ENCODE measurements at regions of chr1 and their contacts with region 1.

Region 1: DNA sequence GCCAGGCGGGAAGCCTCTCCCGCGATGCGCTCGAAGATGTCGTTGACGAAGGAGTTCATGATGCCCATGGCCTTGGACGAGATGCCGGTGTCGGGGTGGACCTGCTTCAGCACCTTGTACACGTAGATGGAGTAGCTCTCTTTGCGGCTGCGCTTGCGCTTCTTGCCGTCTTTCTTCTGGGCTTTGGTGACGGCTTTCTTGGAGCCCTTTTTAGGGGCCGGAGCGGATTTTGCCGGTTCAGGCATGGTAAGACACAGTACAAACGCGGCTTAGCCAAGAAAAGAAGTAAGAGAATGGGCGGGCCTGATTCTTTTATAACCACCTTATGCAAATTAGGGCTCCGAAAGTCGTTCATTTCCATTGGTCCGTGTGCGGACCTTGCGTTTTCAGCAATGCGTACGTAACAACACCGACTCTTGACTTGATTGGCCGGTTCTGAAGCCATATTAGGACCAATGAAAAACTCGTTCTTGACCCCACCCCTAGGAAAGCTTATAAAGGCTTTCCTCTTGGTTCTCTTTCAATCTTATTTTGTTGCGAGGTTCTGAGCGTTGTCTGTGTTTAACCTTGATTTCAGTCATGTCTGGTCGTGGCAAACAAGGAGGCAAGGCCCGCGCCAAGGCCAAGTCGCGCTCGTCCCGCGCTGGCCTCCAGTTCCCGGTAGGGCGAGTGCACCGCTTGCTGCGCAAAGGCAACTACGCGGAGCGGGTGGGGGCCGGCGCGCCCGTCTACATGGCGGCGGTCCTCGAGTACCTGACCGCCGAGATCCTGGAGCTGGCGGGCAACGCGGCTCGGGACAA is 12.8 kb upstream of the BOLA1 start:
- DNase-seq: peak; percentile 71
- ATAC-seq: peak; percentile 65
- H3K4me3 Mint-ChIP-seq: no peak overlapping the region
- H3K27ac Mint-ChIP-seq: no peak overlapping the region
- H3K4me1 Mint-ChIP-seq: peaks cover 4% of the 10 kb centered on the region
- H3K27me3 Mint-ChIP-seq: no peaks in the 10 kb centered on the region
- CTCF ChIP-seq: no peak

Region 2: GRCh38 chr1:149844101-149844500 is 42.5 kb before region 1 on chr1:
- CTCF ChIA-PET with region 1: no interaction called
- POLR2A ChIA-PET with region 1: interaction called, 51 read pairs
- DNase-seq: no peak
- ATAC-seq: no peak
- H3K4me3 Mint-ChIP-seq: peak overlapping the region; percentile 91
- H3K27ac Mint-ChIP-seq: peak overlapping the region; percentile 93
- H3K4me1 Mint-ChIP-seq: peaks cover 44% of the 10 kb centered on the region
- H3K27me3 Mint-ChIP-seq: no peaks in the 10 kb centered on the region
- CTCF ChIP-seq: no peak

Region 3: DNA sequence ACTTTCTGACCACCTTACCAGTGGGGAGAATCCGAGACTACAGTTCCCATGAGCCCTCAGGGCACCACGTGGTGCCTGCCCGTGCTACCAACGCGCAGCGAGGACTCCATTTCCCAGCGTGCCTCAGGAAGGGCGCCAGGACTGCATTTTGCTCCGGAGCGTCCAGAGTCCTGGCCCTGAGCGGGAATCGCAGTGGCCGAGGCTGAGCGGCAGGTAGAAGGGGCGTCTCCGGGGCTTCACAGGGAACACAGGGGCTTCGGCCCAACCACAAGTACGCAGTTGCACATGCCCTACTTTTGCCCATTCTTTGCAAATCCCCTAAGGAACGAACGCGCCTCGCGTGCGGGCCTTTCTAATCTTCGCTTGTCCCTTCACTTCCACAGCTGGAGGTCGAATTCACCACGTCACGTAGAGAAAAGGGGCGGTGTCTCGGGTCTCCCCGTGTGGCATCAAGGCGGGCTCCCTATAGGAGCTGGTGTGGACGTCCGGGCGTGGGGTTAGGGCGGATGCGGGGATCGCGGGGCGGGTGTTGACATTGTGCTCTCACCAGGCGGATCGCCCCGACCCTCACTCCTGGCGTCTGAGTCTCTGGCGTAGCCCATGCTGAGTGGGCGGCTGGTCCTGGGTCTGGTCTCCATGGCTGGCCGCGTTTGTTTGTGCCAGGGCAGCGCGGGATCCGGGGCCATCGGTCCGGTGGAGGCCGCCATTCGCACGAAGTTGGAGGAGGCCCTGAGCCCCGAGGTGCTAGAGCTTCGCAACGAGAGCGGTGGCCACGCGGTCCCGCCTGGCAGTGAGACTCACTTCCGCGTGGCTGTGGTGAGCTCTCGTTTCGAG is 13.1 kb after region 1 on chr1 and contains the start of gene BOLA1:
- CTCF ChIA-PET with region 1: interaction called, 3 read pairs
- POLR2A ChIA-PET with region 1: interaction called, 18 read pairs
- DNase-seq: peak; percentile 94
- ATAC-seq: peak; percentile 97
- H3K4me3 Mint-ChIP-seq: peak within 1 kb of the TSS; percentile 78
- H3K27ac Mint-ChIP-seq: peak within 1 kb of the TSS; percentile 55
- H3K4me1 Mint-ChIP-seq: peaks cover 25% of the 10 kb centered on the region
- H3K27me3 Mint-ChIP-seq: no peaks in the 10 kb centered on the region; the same call in 1 of the 2 replicates
- CTCF ChIP-seq: no peak
- total RNA-seq, gene BOLA1: 15.3 to 19.5 TPM (median 15.4 TPM) in 3 replicates

Region 4: DNA sequence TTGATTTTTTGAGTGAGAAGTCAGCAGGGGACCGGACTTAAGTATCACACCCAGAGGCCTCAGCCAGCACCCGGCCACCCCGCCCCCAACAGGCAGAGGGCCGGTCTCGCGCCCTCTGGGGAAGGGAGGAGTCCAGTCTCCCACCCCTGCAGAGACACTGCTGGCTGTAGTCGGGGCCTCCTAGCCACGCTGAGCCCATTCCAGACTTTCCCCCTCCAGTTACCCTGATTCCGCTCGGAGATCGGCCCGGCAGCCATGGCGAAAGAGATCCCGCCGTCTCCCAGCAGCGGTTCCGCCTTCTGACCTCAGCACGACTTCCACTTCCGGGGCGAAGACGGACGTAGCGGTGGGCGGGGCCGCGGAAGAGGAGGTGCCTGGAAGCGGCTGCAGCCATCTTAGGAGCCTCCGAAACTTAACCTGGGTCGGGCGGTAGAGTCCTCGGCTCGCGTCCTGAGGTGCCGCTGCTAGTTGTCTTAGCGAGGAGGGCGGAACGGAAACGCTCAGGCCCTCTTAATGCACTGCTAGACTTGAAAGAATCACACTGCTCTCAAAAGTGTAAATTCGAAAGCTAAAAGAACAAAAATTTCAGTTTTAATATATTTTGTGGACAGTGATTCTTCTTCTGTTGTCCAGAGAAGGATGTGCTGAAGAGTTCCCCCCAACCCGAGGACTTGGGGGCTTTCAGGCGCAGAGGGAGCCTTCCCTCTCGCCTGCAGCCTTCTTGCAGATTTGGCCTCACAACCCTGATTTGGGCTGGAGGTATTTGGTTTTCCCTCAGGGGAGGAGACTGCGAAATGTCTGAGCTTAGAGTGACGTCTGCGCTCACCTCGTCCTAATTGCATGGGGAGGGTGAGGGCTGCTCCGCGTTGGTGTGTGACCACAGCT is 41.1 kb after region 1 on chr1 and contains the start of gene SF3B4:
- CTCF ChIA-PET with region 1: interaction called, 5 read pairs
- POLR2A ChIA-PET with region 1: interaction called, 28 read pairs
- DNase-seq: peak; percentile 95
- ATAC-seq: peak; percentile 94
- H3K4me3 Mint-ChIP-seq: peak within 1 kb of the TSS; percentile 100
- H3K27ac Mint-ChIP-seq: peak within 1 kb of the TSS; percentile 99
- H3K4me1 Mint-ChIP-seq: peaks cover 24% of the 10 kb centered on the region
- H3K27me3 Mint-ChIP-seq: no peaks in the 10 kb centered on the region
- CTCF ChIP-seq: no peak
- total RNA-seq, gene SF3B4: 83.0 to 90.1 TPM (median 84.7 TPM) in 3 replicates

Region 5: GRCh38 chr1:149942207-149942606 is 55.6 kb after region 1 on chr1:
- CTCF ChIA-PET with region 1: interaction called, 3 read pairs
- POLR2A ChIA-PET with region 1: interaction called, 16 read pairs
- DNase-seq: peak; percentile 53
- ATAC-seq: peak; percentile 77
- H3K4me3 Mint-ChIP-seq: no peak overlapping the region
- H3K27ac Mint-ChIP-seq: peak overlapping the region; percentile 49
- H3K4me1 Mint-ChIP-seq: peaks cover 48% of the 10 kb centered on the region
- H3K27me3 Mint-ChIP-seq: no peaks in the 10 kb centered on the region; the same call in 1 of the 2 replicates
- CTCF ChIP-seq: no peak

Region 6: GRCh38 chr1:149963358-149963757 is 76.8 kb after region 1 on chr1:
- CTCF ChIA-PET with region 1: no interaction called
- POLR2A ChIA-PET with region 1: no interaction called
- DNase-seq: no peak
- ATAC-seq: no peak
- H3K4me3 Mint-ChIP-seq: no peak overlapping the region
- H3K27ac Mint-ChIP-seq: no peak overlapping the region; the same call in 1 of the 2 replicates
- H3K4me1 Mint-ChIP-seq: no peaks in the 10 kb centered on the region
- H3K27me3 Mint-ChIP-seq: no peaks in the 10 kb centered on the region
- CTCF ChIP-seq: no peak

Region 7: GRCh38 chr1:150162862-150163706 is 276.5 kb after region 1 on chr1:
- CTCF ChIA-PET with region 1: interaction called, 6 read pairs
- POLR2A ChIA-PET with region 1: interaction called, 42 read pairs
- DNase-seq: peak; percentile 82
- ATAC-seq: peak; percentile 95
- H3K4me3 Mint-ChIP-seq: peak overlapping the region; percentile 66
- H3K27ac Mint-ChIP-seq: peak overlapping the region; percentile 99
- H3K4me1 Mint-ChIP-seq: peaks cover 42% of the 10 kb centered on the region
- H3K27me3 Mint-ChIP-seq: no peaks in the 10 kb centered on the region
- CTCF ChIP-seq: no peak

Region 8: GRCh38 chr1:151309811-151310323 is 1423.3 kb after region 1 on chr1:
- CTCF ChIA-PET with region 1: no interaction called
- POLR2A ChIA-PET with region 1: no interaction called
- DNase-seq: peak; percentile 39
- ATAC-seq: peak; percentile 93
- H3K4me3 Mint-ChIP-seq: peak overlapping the region; percentile 36
- H3K27ac Mint-ChIP-seq: peak overlapping the region; percentile 51
- H3K4me1 Mint-ChIP-seq: peaks cover 18% of the 10 kb centered on the region
- H3K27me3 Mint-ChIP-seq: no peaks in the 10 kb centered on the region
- CTCF ChIP-seq: no peak